Right ventricle myocardium inferior (tissue), 1 donor: ENCODE measurements at regions of chr5 and their contacts with region 1.

Region 1: DNA sequence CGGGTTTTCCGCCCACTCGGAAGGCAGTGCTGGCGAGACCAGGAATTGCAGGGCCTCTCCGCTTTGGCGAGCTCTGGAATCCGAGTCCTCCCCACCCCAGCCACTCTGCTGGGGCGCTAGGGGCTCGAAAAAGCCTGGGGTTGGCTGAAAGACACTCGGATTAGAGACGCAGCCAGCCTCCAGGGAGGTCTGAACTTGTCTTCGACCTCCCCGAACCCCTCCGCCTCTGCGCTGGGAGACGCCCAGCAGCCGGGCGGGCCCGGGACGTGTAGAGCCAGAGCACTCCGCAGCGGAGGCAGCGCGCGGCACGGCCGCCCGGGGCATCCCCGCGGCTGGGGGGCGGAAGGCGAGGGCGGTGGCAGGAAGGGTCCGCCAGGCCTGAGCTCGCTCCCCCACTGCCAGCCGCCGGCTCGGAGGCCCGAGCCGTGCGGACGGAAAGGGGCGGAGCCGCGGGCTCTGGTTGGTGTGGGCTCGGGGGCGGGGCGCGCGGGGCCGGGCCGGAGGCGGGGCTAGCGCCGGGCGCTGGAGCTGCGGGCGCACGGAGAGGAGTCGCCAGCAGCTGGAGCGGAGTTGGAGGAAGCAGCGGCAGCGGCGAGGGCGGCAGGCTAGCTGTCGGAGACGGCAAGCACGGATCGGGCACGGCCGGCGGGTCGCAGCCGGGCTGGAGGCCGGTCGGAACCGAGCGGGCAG is at the start of gene PIK3R1:
- DNase-seq: peak; percentile 99
- ATAC-seq: peak; percentile 97
- total RNA-seq, gene PIK3R1: 113 TPM

Region 2: DNA sequence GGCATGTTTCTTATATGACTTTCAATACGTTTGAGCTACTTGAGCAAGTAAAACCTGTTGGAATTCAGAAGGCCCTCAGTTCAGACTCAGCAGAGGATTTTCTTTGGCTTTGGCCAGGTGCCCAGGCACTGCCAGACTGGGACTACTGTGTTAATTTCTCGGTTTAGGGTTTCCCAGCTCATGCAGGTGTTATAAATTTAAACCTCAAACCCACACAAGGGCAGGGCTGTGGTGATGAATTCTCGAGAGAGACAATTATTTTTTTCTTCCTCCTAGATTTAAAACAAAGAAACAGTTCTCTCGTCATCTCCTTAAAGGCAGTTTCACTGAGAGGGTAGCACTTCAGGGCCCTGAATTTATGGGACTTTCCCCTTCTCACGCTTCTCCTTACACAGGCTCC is 405.8 kb before region 1 on chr5:
- intact Hi-C with region 1: loop called (anchors 2 kb)
- DNase-seq: no peak
- ATAC-seq: no peak

Region 3: GRCh38 chr5:67971223-67971830 is 244.0 kb before region 1 on chr5:
- intact Hi-C with region 1: loop called (anchors 10 kb)
- DNase-seq: no peak
- ATAC-seq: peak; percentile 83

Region 4: GRCh38 chr5:68086857-68087256 is 128.5 kb before region 1 on chr5:
- intact Hi-C with region 1: loop called (anchors 10 kb)
- DNase-seq: no peak
- ATAC-seq: peak; percentile 66

Region 5: DNA sequence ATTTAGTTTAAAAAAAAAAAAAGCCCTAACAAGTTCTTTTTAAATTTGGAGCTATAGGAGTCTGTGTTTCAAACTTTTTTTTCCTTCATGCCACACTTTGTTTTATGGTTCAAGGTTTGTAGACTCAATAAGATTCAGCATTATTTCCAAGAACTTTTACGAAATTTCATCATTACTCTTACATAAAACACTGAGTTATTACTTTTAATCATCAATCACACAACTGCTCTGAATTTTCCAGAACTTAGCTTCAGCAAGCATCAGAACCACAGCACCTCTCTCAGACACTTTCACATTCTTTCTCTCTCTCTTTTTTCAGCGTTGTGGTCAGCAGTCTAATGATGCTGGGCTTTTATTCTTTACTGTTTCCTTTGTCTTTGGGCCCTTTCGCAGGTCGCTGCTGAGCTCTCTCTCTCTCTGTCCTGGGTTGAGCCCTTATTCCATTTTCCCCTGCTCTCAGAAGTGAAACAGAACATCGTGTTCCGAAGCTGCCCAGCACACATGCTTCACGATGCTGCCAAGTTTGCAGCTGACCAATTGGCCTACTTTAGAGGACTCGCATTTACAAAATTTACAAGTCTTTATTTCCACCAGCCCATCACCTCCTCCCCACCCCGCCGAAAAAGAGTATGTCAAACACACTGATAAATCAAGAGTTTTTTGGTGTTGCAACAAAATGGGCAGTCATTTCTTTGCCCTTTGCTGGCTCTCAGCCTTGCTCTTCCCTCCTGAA is 44.4 kb before region 1 on chr5:
- intact Hi-C with region 1: loop called (anchors 2 kb)
- DNase-seq: peak; percentile 74
- ATAC-seq: peak; percentile 96

Region 6: DNA sequence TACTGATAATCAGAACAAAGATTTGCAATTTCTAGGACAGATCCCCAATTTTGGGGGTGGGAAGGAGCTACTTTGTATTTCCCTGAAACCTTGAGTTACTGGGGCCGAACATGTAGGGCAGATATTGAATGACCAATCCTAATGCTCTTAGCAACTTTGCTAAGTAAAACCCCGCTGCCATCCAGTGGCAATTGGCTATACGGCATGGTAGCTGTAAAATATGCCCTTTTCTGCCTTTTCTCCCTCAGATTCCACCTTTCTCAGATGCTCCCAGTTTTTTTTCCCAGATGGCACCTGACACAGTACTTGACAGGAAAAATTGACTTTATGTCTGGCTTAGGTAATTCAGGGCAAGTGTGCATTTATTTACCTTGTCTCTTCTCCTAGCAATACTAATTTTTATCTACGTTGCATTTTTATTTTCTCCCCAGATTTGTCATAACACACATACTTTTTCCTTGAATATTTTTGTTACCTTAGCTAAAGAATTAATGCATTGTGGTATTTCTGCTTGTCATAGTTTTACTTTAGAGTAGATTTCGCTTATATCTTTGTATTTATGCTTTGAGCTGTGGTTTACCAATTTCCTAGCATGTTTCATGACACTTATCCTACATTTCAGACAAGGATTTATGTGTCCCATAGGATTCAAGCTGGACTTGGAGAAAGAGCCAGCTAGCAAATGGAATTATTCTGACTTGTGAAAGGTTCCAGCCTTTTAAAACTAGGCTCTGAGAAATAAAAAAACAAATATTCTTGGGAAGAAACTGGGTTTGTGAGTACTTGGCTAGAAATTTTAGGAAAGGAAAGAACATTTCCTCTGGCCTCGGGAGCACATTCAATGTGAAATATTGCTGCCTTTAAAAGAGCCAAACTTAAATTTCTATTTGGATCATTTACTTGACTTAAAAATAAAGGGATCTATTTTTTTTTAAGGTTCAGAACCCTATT is 37.6 kb after region 1 on chr5:
- intact Hi-C with region 1: loop called (anchors 5 kb)
- DNase-seq: no peak
- ATAC-seq: peak; percentile 59

Region 7: GRCh38 chr5:68287976-68288706 is 72.8 kb after region 1 on chr5:
- intact Hi-C with region 1: loop called (anchors 5 kb)
- DNase-seq: peak; percentile 84
- ATAC-seq: peak; percentile 85

Region 8: GRCh38 chr5:68331192-68332079 is 116.1 kb after region 1 on chr5:
- intact Hi-C with region 1: no loop called
- DNase-seq: no peak
- ATAC-seq: peak; percentile 16